ENCODE measurements at regions of chr20 and their contacts with region 1.

Region 1: GRCh38 chr20:12925214-12925755 is 83.5 kb upstream of the SPTLC3 start:
- DNase-seq: peak; percentile 52
- H3K4me3 ChIP-seq: no peak overlapping the region
- CTCF ChIP-seq: peak; percentile 88

Region 2: DNA sequence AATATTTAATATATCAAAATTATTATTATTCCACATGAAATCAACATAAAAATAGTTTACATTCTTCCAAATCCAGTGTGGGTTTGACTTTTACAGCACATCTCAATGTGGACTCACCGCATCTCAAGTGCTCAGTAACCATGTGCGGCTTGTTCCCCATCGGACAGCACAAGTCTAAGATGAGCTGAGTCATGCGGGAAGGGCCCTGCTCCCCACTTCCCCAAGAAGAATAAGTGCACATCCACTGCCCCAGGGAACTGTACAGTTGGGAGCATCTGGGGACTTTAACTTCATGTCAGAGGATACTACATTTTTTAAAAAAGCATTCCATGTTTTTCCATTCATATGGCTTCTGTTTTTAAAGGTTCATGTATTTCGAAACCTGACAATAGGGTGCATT is 682.0 kb before region 1 on chr20:
- CTCF ChIA-PET with region 1: no interaction called
- POLR2A ChIA-PET with region 1: no interaction called
- DNase-seq: no peak
- H3K4me3 ChIP-seq: no peak overlapping the region
- CTCF ChIP-seq: no peak

Region 3: DNA sequence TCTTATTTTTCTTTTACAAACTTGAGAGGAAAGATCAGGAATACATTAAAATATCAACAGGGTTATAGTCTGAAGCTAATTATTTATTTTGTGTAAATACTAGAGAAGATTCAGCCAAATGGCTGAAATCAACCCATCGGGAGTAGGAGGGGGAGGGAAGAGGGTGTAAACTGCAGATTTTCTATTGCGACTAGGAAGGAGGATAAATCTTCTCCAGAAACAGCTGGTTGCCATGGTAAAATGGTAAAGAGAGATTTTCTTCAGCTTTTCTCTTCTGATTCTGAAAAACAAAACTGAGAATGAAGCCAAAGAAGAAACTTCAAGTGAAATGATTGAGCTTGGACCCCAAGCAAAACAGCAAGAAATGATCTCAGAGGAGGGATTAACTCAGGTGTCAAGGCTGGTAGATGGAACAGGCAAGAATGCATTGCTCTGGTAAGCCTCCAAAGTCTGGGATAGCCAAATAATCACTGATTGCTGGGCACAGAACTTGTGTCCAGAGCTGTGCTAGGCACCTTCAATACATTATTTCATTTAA is 110.0 kb before region 1 on chr20:
- CTCF ChIA-PET with region 1: no interaction called
- POLR2A ChIA-PET with region 1: no interaction called
- DNase-seq: no peak
- H3K4me3 ChIP-seq: no peak overlapping the region
- CTCF ChIP-seq: no peak

Region 4: GRCh38 chr20:12914804-12915203 is 10.5 kb before region 1 on chr20:
- CTCF ChIA-PET with region 1: interaction called, 12 read pairs
- POLR2A ChIA-PET with region 1: no interaction called
- DNase-seq: no peak
- H3K4me3 ChIP-seq: no peak overlapping the region
- CTCF ChIP-seq: no peak

Region 5: GRCh38 chr20:12936036-12936435 is 10.8 kb after region 1 on chr20:
- CTCF ChIA-PET with region 1: interaction called, 29 read pairs
- POLR2A ChIA-PET with region 1: no interaction called
- DNase-seq: no peak
- H3K4me3 ChIP-seq: no peak overlapping the region
- CTCF ChIP-seq: no peak

Region 6: DNA sequence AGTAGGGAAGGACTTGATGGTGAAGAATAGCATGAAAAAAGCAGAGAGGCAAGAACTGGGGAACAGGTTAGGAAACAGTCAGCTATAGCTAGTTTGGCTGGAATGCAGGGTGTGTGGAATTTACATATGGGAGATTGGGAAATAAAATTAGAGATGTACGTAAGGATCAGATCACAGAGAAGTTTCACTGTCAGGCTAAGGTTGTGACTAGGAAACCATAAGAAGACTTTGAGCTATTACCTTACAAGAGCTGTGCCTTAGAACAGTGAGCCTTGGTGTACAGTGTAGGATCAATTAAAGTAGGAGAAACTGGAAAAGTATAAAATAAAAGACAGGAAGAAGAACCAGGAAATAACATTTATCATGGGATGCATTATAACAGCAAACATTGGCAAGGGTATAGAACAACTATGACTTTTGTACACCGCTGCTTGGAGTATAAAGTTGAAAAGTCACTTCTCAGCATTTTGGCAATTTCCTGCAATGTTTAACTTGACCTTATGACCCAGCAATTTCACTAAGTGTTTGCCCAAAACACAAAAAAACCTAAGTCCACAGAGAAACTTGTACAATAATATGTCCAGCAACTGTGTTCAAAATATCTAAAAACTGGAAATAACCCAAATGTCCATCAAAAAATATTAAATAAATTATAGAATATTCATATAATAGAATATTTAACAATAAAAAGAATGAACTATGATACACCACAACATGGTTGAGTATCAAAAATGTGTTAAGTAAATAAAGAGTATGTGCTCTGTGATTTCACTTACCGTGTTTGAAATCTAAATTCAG is 52.2 kb after region 1 on chr20:
- CTCF ChIA-PET with region 1: interaction called, 582 read pairs
- POLR2A ChIA-PET with region 1: no interaction called
- DNase-seq: no peak
- H3K4me3 ChIP-seq: no peak overlapping the region
- CTCF ChIP-seq: no peak

Region 7: DNA sequence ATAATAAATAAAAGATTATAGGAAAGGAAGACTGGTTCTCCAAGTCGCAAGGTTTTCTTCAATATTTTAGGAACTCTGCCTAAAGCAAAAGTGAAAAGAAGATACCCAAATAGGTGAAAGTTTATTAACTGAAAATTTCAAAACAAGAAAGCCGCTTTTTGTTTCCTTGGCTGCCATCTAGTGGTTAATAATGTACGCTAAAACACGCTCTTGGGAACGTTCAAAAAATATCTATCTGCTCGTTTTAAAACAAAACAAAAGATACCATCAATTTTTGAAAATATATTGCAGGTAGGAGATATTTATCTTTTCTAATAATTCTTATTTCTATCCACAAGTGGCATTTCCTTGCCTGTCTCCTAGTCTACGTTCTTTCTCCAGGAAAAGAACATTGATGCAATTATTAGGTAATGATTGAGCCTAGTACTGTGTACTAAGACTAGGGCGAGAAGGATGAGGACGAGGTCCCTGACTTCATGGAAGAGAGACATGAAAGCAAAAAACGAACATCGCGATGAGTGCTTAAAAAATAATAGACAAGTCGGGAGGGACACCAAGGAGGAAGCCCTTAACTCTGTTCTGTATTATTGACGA is 180.7 kb after region 1 on chr20:
- CTCF ChIA-PET with region 1: interaction called, 54 read pairs
- POLR2A ChIA-PET with region 1: no interaction called
- DNase-seq: peak; percentile 4
- H3K4me3 ChIP-seq: no peak overlapping the region
- CTCF ChIP-seq: peak; percentile 33

Measured in AG04449 (cell line).